ENCODE measurements at regions of chr16 and their contacts with region 1.

Region 1: GRCh38 chr16:29973384-29974246 is at the start of gene TAOK2:
- DNase-seq: peak; percentile 98
- ATAC-seq: peak; percentile 99
- H3K4me3 ChIP-seq: peak within 1 kb of the TSS; percentile 96 to 98
- H3K27ac ChIP-seq: peak within 1 kb of the TSS; percentile 79
- H3K4me1 ChIP-seq: peaks cover 8 to 26% of the 10 kb centered on the region in 2 experiments
- H3K27me3 ChIP-seq: no peaks in the 10 kb centered on the region
- CTCF ChIP-seq: no peak
- POLR2A ChIP-seq: peak; percentile 83
- RAD21 ChIP-seq: no peak
- total RNA-seq, gene TAOK2: 56.7 TPM

Region 2: GRCh38 chr16:29738514-29738913 is 235.1 kb before region 1 on chr16:
- CTCF ChIA-PET with region 1: no interaction called
- POLR2A ChIA-PET with region 1: no interaction called
- RAD21 ChIA-PET with region 1: no interaction called
- intact Hi-C with region 1: no loop called
- DNase-seq: no peak
- ATAC-seq: no peak
- H3K4me3 ChIP-seq: no peak overlapping the region
- H3K27ac ChIP-seq: no peak overlapping the region
- H3K4me1 ChIP-seq: no peaks in the 10 kb centered on the region
- H3K27me3 ChIP-seq: no peaks in the 10 kb centered on the region
- CTCF ChIP-seq: no peak
- POLR2A ChIP-seq: no peak
- RAD21 ChIP-seq: no peak

Region 3: GRCh38 chr16:29900102-29900887 is 73.3 kb before region 1 on chr16 and contains the start of gene ASPHD1:
- CTCF ChIA-PET with region 1: no interaction called
- POLR2A ChIA-PET with region 1: interaction called, 7 read pairs
- RAD21 ChIA-PET with region 1: no interaction called
- intact Hi-C with region 1: loop called (anchors 1 kb)
- DNase-seq: peak; percentile 29
- ATAC-seq: peak; percentile 66
- H3K4me3 ChIP-seq: peak within 1 kb of the TSS; percentile 71 to 75
- H3K27ac ChIP-seq: peak within 1 kb of the TSS; percentile 78
- H3K4me1 ChIP-seq: peaks cover 9 to 31% of the 10 kb centered on the region in 2 experiments
- H3K27me3 ChIP-seq: no peaks in the 10 kb centered on the region
- CTCF ChIP-seq: no peak
- POLR2A ChIP-seq: no peak
- RAD21 ChIP-seq: no peak
- total RNA-seq, gene ASPHD1: 18.4 TPM

Region 4: DNA sequence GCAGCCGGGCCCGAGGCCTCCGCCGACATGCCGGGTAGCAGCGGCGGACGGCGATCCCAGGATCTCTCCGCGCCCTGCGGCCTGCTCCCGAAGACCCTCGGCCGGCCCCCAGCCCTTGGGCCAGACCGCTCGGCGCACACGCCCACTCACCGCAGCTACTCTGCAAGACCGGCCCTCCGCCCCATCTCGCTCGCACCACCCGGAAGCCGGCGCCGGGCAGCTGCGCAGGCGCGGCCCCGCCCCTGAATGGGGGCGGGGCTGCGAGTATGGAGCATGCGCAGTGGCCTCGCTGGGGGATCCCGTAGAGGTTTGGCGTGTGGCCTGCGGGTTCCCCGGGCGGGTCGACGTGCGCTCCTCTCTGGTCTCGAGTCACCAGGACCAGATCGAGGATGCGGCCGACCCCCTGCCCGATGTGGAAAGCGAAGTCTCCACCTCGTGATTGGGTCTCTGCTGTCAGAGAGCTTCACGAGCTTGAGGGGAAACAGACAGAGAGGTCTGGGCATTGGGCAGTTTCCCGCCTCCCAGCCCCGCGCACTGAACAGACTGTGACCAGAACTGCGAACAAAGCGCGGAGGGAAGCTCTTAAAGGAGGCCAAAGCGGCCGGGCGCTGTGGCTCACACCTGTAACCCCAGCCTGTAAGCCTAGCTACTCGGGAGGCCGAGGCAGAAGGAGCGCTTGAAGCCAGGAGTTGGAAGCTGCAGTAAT is 47.5 kb before region 1 on chr16 and contains the start of gene KCTD13:
- CTCF ChIA-PET with region 1: interaction called, 3 read pairs
- POLR2A ChIA-PET with region 1: interaction called, 4 read pairs
- RAD21 ChIA-PET with region 1: interaction called in 1 of 2 experiments, 3 read pairs
- intact Hi-C with region 1: loop called (anchors 5 kb)
- DNase-seq: peak; percentile 48
- ATAC-seq: peak; percentile 95
- H3K4me3 ChIP-seq: peak within 1 kb of the TSS; percentile 60 to 92
- H3K27ac ChIP-seq: peak within 1 kb of the TSS; percentile 78
- H3K4me1 ChIP-seq: peaks cover 12 to 23% of the 10 kb centered on the region in 2 experiments
- H3K27me3 ChIP-seq: no peaks in the 10 kb centered on the region
- CTCF ChIP-seq: no peak
- POLR2A ChIP-seq: peak; percentile 86
- RAD21 ChIP-seq: no peak
- total RNA-seq, gene KCTD13: 40.7 TPM

Region 5: DNA sequence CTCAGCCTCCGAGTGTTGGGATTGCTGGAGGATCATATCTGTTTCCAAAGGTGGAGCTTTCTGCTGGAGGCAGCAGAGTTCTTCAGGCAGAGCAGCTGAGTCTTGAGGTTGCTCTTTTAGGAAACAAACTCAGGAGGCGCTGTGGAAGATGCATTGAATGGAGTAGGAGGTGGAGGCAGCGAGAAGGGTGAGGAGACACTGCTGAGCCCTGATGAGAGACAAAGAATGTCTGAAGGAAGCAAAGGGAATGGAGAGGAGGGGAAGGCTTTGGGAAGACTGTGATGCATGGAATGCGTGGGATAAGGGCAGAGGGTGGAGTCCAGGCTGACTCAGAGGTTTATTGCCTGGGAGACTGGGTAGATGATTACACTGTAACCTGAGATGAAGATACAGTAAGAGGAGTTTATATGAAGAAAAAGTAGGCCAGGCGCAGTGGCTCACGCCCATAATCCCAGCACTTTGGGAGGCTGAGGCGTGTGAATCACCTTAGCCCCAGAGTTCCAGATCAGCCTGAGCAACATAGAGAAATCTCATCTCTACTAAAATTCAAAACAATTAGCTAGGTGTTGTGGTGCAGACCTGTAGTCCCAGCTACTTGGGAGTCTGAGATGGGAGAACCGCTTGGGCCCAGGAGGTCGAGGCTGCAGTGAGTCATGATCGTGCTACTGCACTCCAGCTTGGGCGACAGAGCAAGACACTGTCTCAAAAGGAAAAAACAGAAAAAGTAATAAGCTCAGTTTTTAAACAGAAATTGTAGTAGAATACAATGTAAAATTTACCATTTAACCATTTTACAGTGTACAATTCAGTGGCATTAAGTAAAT is 29.6 kb before region 1 on chr16:
- CTCF ChIA-PET with region 1: interaction called, 4 read pairs
- POLR2A ChIA-PET with region 1: interaction called, 22 read pairs
- RAD21 ChIA-PET with region 1: interaction called, 3 to 4 read pairs
- intact Hi-C with region 1: loop called (anchors 1 kb)
- DNase-seq: peak; percentile 98
- ATAC-seq: peak; percentile 96
- H3K4me3 ChIP-seq: peak overlapping the region; percentile 21 to 41
- H3K27ac ChIP-seq: peak overlapping the region; percentile 93
- H3K4me1 ChIP-seq: peaks cover 31 to 41% of the 10 kb centered on the region in 2 experiments
- H3K27me3 ChIP-seq: no peaks in the 10 kb centered on the region
- CTCF ChIP-seq: peak; percentile 40 to 66 (median 42); a peak in 5 of 6 replicates
- POLR2A ChIP-seq: peak; percentile 19
- RAD21 ChIP-seq: peak; percentile 55

Region 6: DNA sequence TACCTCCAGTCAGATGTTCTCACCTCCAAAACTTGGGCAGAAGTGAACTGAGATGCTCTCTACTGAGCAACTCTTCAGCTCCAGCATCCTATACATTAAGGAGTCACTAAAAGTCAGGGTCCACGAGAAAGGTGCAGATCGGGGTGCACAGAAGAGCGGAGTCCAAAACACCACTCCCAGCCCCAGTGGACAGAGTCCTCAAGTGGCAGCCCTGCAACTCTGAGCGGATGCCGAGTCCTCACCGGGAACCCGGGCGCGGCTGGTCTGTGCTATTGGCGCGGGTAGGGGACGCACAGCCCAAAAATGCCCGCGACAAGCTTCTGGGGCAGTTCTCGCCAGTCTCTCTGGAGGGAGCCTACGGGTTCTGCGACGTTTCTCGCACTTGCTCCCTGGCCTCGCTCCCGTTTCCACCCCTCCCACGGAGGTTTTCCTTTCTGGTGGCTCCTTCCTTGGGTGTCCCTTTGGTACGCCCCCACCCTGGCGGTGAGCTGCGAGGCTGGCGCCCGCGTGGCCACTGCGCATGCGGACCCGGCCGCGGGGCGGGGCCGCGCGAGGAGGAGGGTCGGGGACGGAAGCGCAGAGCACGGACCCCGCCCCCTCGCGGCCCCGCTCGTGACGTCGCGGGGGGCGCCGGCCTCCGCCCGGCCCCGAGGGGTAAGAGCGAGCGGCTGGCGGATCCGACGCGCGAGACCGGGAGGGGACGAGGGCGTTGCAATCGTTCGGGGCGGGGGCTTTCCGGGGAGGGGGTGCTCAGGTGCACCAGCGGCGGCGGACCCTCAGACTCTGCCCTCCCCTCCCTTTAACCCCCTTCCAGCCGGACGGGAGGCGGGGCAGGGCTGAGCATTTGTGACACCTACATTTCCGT is 11.9 kb before region 1 on chr16 and contains the start of gene TMEM219:
- CTCF ChIA-PET with region 1: interaction called, 5 read pairs
- POLR2A ChIA-PET with region 1: interaction called, 18 read pairs
- RAD21 ChIA-PET with region 1: interaction called in 1 of 2 experiments, 4 read pairs
- intact Hi-C with region 1: no loop called
- DNase-seq: peak; percentile 56
- ATAC-seq: peak; percentile 96
- H3K4me3 ChIP-seq: peak within 1 kb of the TSS; percentile 64 to 71
- H3K27ac ChIP-seq: peak within 1 kb of the TSS; percentile 73
- H3K4me1 ChIP-seq: peaks cover 11 to 24% of the 10 kb centered on the region in 2 experiments
- H3K27me3 ChIP-seq: no peaks in the 10 kb centered on the region
- CTCF ChIP-seq: peak in 2 of 3 experiments; percentile 27 to 35; a peak in 3 of 6 replicates
- POLR2A ChIP-seq: no peak
- RAD21 ChIP-seq: no peak
- total RNA-seq, gene TMEM219: 75.5 TPM

Region 7: GRCh38 chr16:30005341-30006094 is 31.9 kb after region 1 on chr16:
- CTCF ChIA-PET with region 1: no interaction called
- POLR2A ChIA-PET with region 1: no interaction called
- RAD21 ChIA-PET with region 1: no interaction called
- intact Hi-C with region 1: no loop called
- DNase-seq: no peak
- ATAC-seq: peak; percentile 67
- H3K4me3 ChIP-seq: no peak overlapping the region
- H3K27ac ChIP-seq: no peak overlapping the region
- H3K4me1 ChIP-seq: no peaks in the 10 kb centered on the region
- H3K27me3 ChIP-seq: no peaks in the 10 kb centered on the region
- CTCF ChIP-seq: peak; percentile 66 to 81 (median 81)
- POLR2A ChIP-seq: no peak
- RAD21 ChIP-seq: peak; percentile 73